ENCODE measurements at regions of chr3 and their contacts with region 1.

Region 1: DNA sequence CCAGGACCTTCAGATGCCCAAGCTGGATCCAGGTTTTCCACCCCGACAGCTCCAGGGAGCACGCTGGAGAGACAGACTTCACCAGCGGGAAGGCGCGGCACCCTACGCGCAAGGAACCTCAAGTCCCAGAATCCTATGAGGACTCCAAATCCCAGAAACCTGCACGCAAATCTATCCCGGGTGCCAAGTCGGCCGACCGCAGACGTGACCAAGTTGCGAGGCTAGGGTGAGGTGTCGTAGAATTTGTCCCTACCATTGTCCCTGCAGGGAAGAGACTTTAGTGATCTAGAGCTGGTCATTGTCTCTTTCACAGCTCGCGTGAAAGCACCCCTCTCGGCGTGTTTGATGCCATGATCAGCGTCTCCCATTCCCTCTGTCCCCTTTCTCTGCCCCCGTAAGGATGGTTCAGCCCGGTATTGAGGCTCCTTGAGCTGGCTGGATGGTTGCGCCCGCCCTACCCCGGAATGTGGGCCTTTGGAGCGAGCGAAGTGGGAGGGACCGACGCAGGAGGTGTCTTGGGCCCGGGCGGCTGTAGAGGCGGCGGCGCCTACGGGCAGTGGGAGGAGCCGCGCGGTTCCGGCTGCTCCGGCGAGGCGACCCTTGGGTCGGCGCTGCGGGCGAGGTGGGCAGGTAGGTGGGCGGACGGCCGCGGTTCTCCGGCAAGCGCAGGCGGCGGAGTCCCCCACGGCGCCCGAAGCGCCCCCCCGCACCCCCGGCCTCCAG is at the start of gene PRKCI:
- DNase-seq: peak; percentile 79 to 96 (median 86)
- ATAC-seq: peak; percentile 84
- H3K4me3 ChIP-seq: peak within 1 kb of the TSS; percentile 72
- H3K4me3 Mint-ChIP-seq: peak within 1 kb of the TSS; percentile 95
- H3K27ac ChIP-seq: peak within 1 kb of the TSS; percentile 55 to 78
- H3K27ac Mint-ChIP-seq: peak within 1 kb of the TSS; percentile 93
- H3K4me1 ChIP-seq: peaks cover 15% of the 10 kb centered on the region
- H3K4me1 Mint-ChIP-seq: peaks cover 32% of the 10 kb centered on the region
- H3K27me3 ChIP-seq: no peaks in the 10 kb centered on the region
- H3K27me3 Mint-ChIP-seq: no peaks in the 10 kb centered on the region
- CTCF ChIP-seq: no peak
- total RNA-seq, gene PRKCI: 16.4 to 18.0 TPM

Region 2: GRCh38 chr3:169497567-169498257 is 724.4 kb before region 1 on chr3:
- CTCF ChIA-PET with region 1: no interaction called
- POLR2A ChIA-PET with region 1: no interaction called
- intact Hi-C with region 1: no loop called
- DNase-seq: no peak
- ATAC-seq: no peak
- H3K4me3 ChIP-seq: no peak overlapping the region
- H3K4me3 Mint-ChIP-seq: no peak overlapping the region
- H3K27ac ChIP-seq: no peak overlapping the region
- H3K27ac Mint-ChIP-seq: no peak overlapping the region
- H3K4me1 ChIP-seq: no peaks in the 10 kb centered on the region
- H3K4me1 Mint-ChIP-seq: no peaks in the 10 kb centered on the region
- H3K27me3 ChIP-seq: no peaks in the 10 kb centered on the region
- H3K27me3 Mint-ChIP-seq: no peaks in the 10 kb centered on the region
- CTCF ChIP-seq: no peak

Region 3: DNA sequence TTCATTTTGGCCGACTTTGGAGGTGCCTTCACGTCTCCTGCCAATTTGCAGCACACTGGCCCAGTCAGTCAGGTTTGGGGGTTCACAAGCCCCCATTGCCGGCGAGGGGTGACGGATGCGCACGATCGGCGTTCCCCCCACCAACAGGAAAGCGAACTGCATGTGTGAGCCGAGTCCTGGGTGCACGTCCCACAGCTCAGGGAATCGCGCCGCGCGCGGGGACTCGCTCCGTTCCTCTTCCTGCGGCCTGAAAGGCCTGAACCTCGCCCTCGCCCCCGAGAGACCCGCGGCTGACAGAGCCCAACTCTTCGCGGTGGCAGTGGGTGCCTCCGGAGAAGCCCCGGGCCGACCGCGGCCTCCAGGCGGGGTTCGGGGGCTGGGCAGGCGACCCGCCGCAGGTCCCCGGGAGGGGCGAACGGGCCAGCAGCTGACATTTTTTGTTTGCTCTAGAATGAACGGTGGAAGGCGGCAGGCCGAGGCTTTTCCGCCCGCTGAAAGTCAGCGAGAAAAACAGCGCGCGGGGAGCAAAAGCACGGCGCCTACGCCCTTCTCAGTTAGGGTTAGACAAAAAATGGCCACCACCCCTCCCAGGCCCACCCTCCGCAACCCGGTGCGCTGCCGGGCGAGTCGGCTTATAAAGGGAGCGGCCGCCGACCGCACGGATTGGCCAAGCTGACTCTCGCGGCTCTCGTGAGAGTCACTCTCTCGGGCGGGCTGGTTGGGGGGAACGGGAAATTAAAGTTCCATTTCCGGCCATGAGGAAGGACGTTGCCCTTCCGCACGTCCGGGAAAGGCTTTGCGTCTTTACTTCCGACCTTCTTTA is 457.4 kb before region 1 on chr3 and contains the start of gene TERC:
- CTCF ChIA-PET with region 1: no interaction called
- POLR2A ChIA-PET with region 1: interaction called, 4 read pairs
- intact Hi-C with region 1: loop called in 1 of 2 experiments (anchors 5 kb)
- DNase-seq: peak; percentile 82 to 98 (median 92)
- ATAC-seq: peak; percentile 82
- H3K4me3 ChIP-seq: peak within 1 kb of the TSS; percentile 93
- H3K4me3 Mint-ChIP-seq: peak within 1 kb of the TSS; percentile 98
- H3K27ac ChIP-seq: peak within 1 kb of the TSS; percentile 95 to 96
- H3K27ac Mint-ChIP-seq: peak within 1 kb of the TSS; percentile 97
- H3K4me1 ChIP-seq: peaks cover 27% of the 10 kb centered on the region
- H3K4me1 Mint-ChIP-seq: peaks cover 38% of the 10 kb centered on the region
- H3K27me3 ChIP-seq: no peaks in the 10 kb centered on the region
- H3K27me3 Mint-ChIP-seq: no peaks in the 10 kb centered on the region
- CTCF ChIP-seq: no peak
- total RNA-seq, gene TERC: 9.0 to 10.4 TPM

Region 4: DNA sequence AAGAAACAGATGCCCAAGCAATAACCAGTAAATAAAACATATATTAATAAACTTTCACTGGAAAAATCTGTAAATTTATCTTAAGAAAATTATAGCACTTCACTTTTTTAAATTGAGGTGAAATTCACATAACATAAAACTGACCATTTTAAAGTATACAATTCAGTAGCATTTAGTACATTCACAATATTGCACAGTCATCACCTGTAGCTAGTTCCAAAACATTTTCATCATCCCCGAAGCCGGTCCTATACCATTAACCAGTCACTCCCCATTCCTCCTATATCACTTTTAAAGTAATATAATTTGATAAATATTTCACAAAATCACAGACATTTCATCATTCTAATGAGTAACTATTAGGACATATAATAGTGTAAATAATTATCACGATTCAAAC is 417.4 kb before region 1 on chr3:
- CTCF ChIA-PET with region 1: no interaction called
- POLR2A ChIA-PET with region 1: no interaction called
- intact Hi-C with region 1: no loop called
- DNase-seq: no peak
- ATAC-seq: no peak
- H3K4me3 ChIP-seq: no peak overlapping the region
- H3K4me3 Mint-ChIP-seq: no peak overlapping the region
- H3K27ac ChIP-seq: no peak overlapping the region
- H3K27ac Mint-ChIP-seq: no peak overlapping the region
- H3K4me1 ChIP-seq: no peaks in the 10 kb centered on the region
- H3K4me1 Mint-ChIP-seq: no peaks in the 10 kb centered on the region
- H3K27me3 ChIP-seq: no peaks in the 10 kb centered on the region
- H3K27me3 Mint-ChIP-seq: no peaks in the 10 kb centered on the region
- CTCF ChIP-seq: no peak

Region 5: DNA sequence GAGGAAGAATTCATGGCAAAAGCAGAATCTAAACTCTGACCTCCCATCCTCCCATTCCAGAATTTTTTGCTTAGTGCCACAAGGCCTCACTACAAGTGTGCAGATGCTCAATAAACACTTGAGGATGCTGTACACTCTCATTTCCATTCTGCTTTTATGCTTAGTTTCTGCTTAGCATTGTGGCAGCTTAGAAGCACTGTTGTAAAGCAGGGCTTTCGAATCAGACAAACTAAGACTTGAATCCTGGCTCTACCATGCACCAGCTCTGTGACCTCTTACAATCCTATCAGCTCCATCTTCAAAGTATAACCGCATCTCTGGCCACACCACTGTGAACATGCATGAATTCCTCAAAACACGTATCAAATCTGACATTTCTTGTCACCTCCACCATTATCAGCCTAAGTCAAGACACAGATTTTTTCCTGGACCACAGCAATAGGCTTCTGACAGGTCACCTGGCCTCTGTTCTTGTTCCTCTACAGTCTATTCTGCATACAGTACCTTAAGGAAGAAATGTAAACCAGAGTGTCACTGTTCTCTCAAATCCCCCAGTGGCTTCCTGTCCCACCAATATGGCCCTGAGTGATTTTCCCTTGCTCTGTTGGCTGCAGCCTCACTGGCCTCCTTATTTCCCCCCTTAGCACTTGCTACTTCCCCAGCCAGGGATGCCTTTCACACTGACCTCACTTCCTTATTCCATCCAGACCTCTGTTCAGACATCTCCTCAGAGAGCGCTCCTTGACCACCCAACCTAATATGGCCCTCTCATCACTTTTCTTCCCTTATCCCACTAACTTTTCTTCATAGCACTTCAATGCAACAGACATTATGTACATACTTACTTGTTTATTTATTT is 32.5 kb before region 1 on chr3:
- CTCF ChIA-PET with region 1: interaction called, 5 read pairs
- POLR2A ChIA-PET with region 1: no interaction called
- intact Hi-C with region 1: loop called in 1 of 2 experiments (anchors 2 kb)
- DNase-seq: no peak
- ATAC-seq: peak; percentile 16
- H3K4me3 ChIP-seq: no peak overlapping the region
- H3K4me3 Mint-ChIP-seq: no peak overlapping the region
- H3K27ac ChIP-seq: no peak overlapping the region
- H3K27ac Mint-ChIP-seq: no peak overlapping the region
- H3K4me1 ChIP-seq: peaks cover 10% of the 10 kb centered on the region
- H3K4me1 Mint-ChIP-seq: peaks cover 11% of the 10 kb centered on the region
- H3K27me3 ChIP-seq: no peaks in the 10 kb centered on the region
- H3K27me3 Mint-ChIP-seq: no peaks in the 10 kb centered on the region
- CTCF ChIP-seq: no peak

Region 6: GRCh38 chr3:170257145-170257544 is 35.1 kb after region 1 on chr3:
- CTCF ChIA-PET with region 1: no interaction called
- POLR2A ChIA-PET with region 1: no interaction called
- intact Hi-C with region 1: loop called in 1 of 2 experiments (anchors 5 kb)
- DNase-seq: no peak
- ATAC-seq: no peak
- H3K4me3 ChIP-seq: no peak overlapping the region
- H3K4me3 Mint-ChIP-seq: no peak overlapping the region
- H3K27ac ChIP-seq: no peak overlapping the region
- H3K27ac Mint-ChIP-seq: no peak overlapping the region
- H3K4me1 ChIP-seq: peaks cover 6% of the 10 kb centered on the region
- H3K4me1 Mint-ChIP-seq: peaks cover 44% of the 10 kb centered on the region
- H3K27me3 ChIP-seq: no peaks in the 10 kb centered on the region
- H3K27me3 Mint-ChIP-seq: no peaks in the 10 kb centered on the region
- CTCF ChIP-seq: no peak

Region 7: DNA sequence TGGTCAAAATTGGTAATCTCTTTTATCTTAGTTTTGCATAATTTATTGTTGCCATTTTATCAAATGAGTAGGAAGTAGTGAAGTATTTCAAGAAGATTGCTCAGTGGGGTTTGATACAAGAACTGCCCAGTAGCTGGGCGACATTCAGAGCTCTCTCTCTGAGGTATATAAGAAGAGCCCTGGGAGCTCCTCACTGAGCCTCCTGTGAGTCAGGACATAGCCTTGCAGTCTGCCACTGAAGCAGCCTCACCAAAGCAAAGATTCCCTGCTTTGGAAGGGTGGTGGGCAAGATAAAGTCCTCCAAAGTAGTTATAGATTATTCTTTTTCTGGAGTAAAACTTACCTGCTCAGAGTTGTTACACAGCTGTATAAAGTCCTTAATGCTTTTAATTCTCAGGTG is 161.5 kb after region 1 on chr3:
- CTCF ChIA-PET with region 1: no interaction called
- POLR2A ChIA-PET with region 1: no interaction called
- intact Hi-C with region 1: no loop called
- DNase-seq: no peak
- ATAC-seq: no peak
- H3K4me3 ChIP-seq: no peak overlapping the region
- H3K4me3 Mint-ChIP-seq: no peak overlapping the region
- H3K27ac ChIP-seq: no peak overlapping the region
- H3K27ac Mint-ChIP-seq: peak overlapping the region; percentile 12
- H3K4me1 ChIP-seq: no peaks in the 10 kb centered on the region
- H3K4me1 Mint-ChIP-seq: peaks cover 13% of the 10 kb centered on the region
- H3K27me3 ChIP-seq: no peaks in the 10 kb centered on the region
- H3K27me3 Mint-ChIP-seq: no peaks in the 10 kb centered on the region
- CTCF ChIP-seq: no peak

Measured in CD4-positive, alpha-beta T cell (primary cell).